Activated naive CD4-positive, alpha-beta T cell treated with anti-CD3 and anti-CD28 coated beads for 36 hours (primary cell): ENCODE measurements at regions of chr6 and their contacts with region 1.

Region 1: GRCh38 chr6:15776458-15776980 is 113.7 kb upstream of the DTNBP1 start:
- DNase-seq: peak; percentile 69
- H3K4me3 Mint-ChIP-seq: no peak overlapping the region
- H3K27ac Mint-ChIP-seq: peak overlapping the region; percentile 76
- H3K4me1 Mint-ChIP-seq: peaks cover 40% of the 10 kb centered on the region
- H3K27me3 Mint-ChIP-seq: peaks cover 4% of the 10 kb centered on the region

Region 2: GRCh38 chr6:15184441-15184861 is 592.1 kb before region 1 on chr6:
- CTCF ChIA-PET with region 1: no interaction called
- intact Hi-C with region 1: loop called (anchors 1 kb)
- DNase-seq: peak; percentile 78
- H3K4me3 Mint-ChIP-seq: no peak overlapping the region
- H3K27ac Mint-ChIP-seq: peak overlapping the region; percentile 99
- H3K4me1 Mint-ChIP-seq: peaks cover 25% of the 10 kb centered on the region
- H3K27me3 Mint-ChIP-seq: no peaks in the 10 kb centered on the region

Region 3: GRCh38 chr6:15735567-15736265 is 40.8 kb before region 1 on chr6:
- CTCF ChIA-PET with region 1: interaction called, 3 read pairs
- intact Hi-C with region 1: loop called (anchors 1 kb)
- DNase-seq: no peak
- H3K4me3 Mint-ChIP-seq: no peak overlapping the region
- H3K27ac Mint-ChIP-seq: peak overlapping the region; percentile 43
- H3K4me1 Mint-ChIP-seq: peaks cover 47% of the 10 kb centered on the region
- H3K27me3 Mint-ChIP-seq: peaks cover 2% of the 10 kb centered on the region

Region 4: GRCh38 chr6:15911753-15912504 is 135.4 kb after region 1 on chr6:
- CTCF ChIA-PET with region 1: no interaction called
- intact Hi-C with region 1: loop called (anchors 1 kb)
- DNase-seq: peak; percentile 69
- H3K4me3 Mint-ChIP-seq: no peak overlapping the region
- H3K27ac Mint-ChIP-seq: no peak overlapping the region
- H3K4me1 Mint-ChIP-seq: peaks cover 31% of the 10 kb centered on the region
- H3K27me3 Mint-ChIP-seq: peaks cover 2% of the 10 kb centered on the region

Region 5: DNA sequence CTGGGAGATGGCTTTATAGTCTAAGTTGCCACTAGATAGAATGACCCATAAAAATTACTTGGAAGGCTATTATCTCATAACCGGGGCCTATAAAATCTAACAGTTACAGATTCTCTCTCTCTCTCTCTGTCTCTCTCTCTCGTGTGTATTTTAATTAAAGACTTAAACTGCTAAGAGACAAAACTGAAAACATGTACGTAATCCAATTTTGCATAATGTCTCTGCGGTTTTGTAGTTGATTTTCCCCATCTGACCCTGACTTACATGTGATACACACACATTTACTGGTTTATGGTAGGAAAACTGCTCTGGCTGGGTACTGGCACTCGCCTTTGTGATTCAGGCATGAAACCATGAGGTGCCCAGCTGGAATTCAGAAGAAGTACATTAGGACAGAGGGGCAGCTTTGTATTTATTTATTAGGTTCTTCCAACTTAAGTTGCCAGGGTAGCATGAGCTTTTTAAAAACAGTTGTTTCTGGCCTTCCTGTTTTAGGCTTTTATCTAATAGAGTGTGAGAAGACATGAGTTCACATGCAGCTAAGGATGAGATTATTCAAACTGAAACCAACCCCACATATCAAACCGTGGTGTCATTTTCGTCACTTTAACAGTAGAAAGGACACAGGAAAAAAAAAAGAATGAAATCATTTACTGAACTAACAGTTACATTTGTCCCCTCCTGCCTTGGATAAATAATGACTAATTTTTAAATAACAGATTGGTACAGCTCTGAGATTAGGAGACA is 644.4 kb after region 1 on chr6:
- CTCF ChIA-PET with region 1: no interaction called
- intact Hi-C with region 1: loop called (anchors 2 kb)
- DNase-seq: peak; percentile 66
- H3K4me3 Mint-ChIP-seq: peak overlapping the region; percentile 45
- H3K27ac Mint-ChIP-seq: peak overlapping the region; percentile 95
- H3K4me1 Mint-ChIP-seq: peaks cover 42% of the 10 kb centered on the region
- H3K27me3 Mint-ChIP-seq: no peaks in the 10 kb centered on the region